ENCODE measurements at regions of chr4 and their contacts with region 1.

Region 1: DNA sequence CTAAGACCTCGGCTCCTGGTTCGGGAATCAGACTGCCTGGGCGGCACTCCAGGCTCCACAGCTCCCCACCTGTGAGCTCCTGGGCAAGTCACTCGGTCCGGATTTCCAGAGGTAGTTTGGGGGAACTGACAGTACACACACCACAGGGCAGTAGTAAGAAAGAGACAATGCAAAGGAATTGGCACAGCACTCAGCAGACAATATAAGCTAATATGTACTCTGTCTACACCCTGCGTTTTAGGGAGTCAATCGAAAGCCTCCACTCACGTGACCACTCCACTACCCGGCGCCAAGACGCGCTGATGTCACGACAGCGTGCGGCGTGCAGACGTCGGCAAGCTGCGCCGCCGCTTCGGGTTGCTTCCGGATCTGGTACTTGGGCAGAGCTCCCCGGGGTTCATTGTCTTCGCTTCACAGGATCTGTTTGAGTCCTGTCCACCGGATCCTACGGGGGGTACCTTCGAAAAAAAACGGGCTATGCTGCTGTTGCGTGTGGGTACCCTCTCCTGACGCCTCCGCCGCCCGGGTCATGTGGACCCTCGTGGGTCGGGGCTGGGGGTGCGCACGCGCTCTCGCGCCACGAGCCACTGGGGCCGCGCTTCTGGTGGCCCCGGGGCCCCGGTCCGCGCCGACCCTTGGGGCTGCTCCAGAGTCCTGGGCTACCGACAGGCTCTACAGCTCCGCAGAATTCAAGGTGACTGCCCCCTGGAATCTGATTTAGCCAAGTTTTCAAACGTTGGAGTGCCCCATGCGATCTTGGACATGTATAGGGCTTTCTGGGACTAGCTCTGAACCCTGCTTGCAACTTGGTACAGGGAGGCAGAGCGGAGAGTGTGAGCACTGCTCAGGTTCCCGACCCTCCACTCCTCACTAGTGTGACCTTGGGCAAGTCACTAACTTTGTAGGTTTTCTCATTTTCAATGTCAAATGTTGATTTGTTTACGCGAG is at the start of gene GUF1:
- DNase-seq: peak; percentile 93
- ATAC-seq: peak; percentile 91
- H3K4me3 Mint-ChIP-seq: peak within 1 kb of the TSS; percentile 96
- H3K27ac Mint-ChIP-seq: peak within 1 kb of the TSS; percentile 99
- H3K4me1 Mint-ChIP-seq: peaks cover 36% of the 10 kb centered on the region
- H3K27me3 Mint-ChIP-seq: no peaks in the 10 kb centered on the region
- total RNA-seq, gene GUF1: 22.9 to 26.0 TPM

Region 2: DNA sequence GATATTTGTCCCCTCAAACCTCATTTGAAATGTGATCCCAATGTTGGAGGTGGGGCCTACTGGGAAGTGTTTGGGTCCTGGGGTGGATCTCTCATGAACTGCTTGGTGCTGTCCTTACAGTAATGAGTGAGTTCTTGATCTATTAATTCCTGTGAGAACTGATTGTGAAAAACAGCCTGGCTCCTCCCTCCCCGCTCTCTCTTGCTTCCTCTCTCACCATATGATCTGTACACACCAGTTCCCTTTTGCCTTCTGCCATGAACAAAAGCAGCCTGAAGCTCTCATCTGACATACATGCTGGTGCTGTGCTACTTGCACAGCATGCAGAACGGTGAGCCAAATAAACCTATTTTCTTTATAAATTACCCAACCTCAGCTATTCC is 15.8 kb before region 1 on chr4:
- CTCF ChIA-PET with region 1: no interaction called
- POLR2A ChIA-PET with region 1: no interaction called
- DNase-seq: no peak
- ATAC-seq: no peak
- H3K4me3 Mint-ChIP-seq: no peak overlapping the region
- H3K27ac Mint-ChIP-seq: no peak overlapping the region
- H3K4me1 Mint-ChIP-seq: no peaks in the 10 kb centered on the region
- H3K27me3 Mint-ChIP-seq: peaks cover 3% of the 10 kb centered on the region

Region 3: GRCh38 chr4:44701037-44701436 is 22.7 kb after region 1 on chr4:
- CTCF ChIA-PET with region 1: interaction called, 4 read pairs
- POLR2A ChIA-PET with region 1: interaction called, 20 read pairs
- DNase-seq: no peak
- ATAC-seq: no peak
- H3K4me3 Mint-ChIP-seq: no peak overlapping the region
- H3K27ac Mint-ChIP-seq: no peak overlapping the region
- H3K4me1 Mint-ChIP-seq: peaks cover 2% of the 10 kb centered on the region
- H3K27me3 Mint-ChIP-seq: no peaks in the 10 kb centered on the region

Region 4: DNA sequence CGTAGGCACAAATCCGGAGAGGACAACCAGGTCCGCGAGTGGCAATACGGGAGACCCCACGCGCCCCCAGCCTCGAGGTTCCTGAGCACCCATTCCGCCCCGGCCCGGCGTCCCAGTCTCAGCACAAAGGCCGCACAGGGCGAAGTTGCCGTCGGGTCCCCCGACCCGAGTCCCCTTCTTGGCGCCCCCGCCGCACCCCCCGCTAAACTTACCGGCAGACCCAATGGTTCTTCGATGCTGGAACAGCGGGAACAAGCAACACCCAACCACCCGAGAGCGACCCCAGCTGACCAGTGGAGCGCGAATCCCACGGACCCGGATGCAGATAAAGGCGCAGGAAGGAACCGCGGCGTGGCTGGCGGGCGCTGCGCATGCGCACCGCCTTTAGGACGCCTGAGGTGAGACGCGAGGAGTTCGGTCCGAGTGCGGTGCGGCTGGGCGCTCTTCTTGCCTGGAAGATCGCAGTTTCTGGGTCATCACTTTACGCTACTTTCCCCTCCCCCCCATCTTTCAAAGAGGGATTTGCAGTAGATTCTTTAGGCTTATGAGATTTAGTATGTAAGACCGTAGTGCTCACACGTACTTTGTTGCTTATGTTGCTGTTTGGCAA is 48.0 kb after region 1 on chr4 and contains the start of gene GNPDA2:
- CTCF ChIA-PET with region 1: interaction called, 11 read pairs
- POLR2A ChIA-PET with region 1: interaction called, 18 read pairs
- DNase-seq: peak; percentile 86
- ATAC-seq: peak; percentile 96
- H3K4me3 Mint-ChIP-seq: peak within 1 kb of the TSS; percentile 91
- H3K27ac Mint-ChIP-seq: peak within 1 kb of the TSS; percentile 91
- H3K4me1 Mint-ChIP-seq: peaks cover 19% of the 10 kb centered on the region
- H3K27me3 Mint-ChIP-seq: peaks cover under 1% of the 10 kb centered on the region
- total RNA-seq, gene GNPDA2: 11.5 to 12.5 TPM